Activated naive CD4-positive, alpha-beta T cell treated with anti-CD3 and anti-CD28 coated beads, Interleukin-2, amount 10 ng/mL, durations not matched to agents 7 days and 5 days (primary cell): ENCODE measurements at regions of chr1 and their contacts with region 1.

Region 1: DNA sequence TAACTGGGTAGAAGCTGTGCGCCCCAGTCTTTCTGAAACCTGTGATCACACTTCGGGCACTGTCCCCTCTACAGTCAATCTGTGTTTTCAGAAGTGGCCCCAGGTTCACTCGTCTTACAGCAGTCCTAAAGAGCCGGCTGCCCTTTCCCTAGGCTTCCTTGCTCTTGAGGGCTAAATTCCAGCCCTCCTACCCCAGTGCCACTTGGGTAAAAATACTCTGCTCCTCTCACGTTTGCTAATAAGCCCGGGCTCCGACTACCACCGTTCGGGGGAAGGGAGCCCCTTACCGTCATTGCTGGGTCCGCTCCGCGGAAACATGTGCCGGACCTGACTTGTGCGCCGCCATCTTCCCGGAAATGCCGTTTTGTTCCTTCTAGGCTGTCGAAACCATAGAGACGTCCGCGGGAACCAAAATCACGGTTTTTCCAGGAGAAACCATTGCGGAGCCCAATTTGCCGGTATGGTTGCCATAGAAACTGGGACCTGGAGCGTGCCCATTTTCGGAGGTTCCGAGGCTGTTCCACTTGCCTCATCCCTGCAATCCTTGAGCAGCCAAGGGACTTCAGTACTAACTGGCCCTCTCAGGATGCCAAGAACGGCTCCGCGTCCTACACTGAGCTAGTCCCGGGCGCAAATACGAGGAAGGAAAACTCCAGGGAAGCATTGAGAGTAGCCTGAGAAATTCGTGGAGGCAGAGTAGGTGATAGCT is at the start of gene GPATCH4:
- DNase-seq: peak; percentile 89
- H3K4me3 Mint-ChIP-seq: peak within 1 kb of the TSS; percentile 98
- H3K27ac Mint-ChIP-seq: peak within 1 kb of the TSS; percentile 93
- H3K4me1 Mint-ChIP-seq: peaks cover 41% of the 10 kb centered on the region
- H3K27me3 Mint-ChIP-seq: no peaks in the 10 kb centered on the region

Region 2: DNA sequence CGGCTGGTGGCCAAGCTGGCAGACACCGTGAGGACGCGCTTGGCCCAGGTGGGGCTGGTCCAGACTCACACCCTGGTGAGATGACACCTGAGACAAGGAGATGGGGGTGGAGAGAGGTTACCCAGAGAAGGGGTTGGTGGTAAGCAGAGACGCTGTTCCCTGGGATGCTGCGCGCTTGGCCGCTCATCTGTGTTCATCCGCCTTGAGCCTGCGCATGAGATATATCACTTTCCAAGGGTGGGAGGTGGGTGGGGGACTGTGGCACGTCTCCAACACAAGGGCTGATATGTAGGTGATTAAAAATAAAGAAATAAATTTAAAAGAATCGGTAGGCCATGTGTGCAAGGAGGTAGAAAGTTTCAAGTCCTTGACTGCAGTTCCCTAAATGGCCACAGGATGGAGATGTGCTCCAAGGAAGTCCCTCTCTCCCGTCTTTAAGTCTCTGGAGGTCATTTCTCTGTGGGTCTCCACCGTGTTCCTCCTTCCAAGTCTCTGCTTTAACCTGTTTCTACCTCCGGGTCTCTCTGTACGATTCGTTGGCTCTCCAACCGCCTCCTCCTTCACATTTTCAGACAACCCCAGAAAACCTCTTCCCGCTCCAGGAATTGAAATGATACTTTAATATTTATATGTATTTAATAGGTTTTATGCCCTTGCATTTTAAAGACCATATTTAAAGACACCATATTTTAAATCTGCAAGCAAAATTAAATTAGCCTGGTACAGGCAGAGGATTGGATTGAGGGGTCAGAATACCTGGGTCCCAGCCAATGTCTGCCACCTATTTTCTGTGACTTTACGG is 17.3 kb before region 1 on chr1:
- CTCF ChIA-PET with region 1: interaction called, 12 read pairs
- DNase-seq: peak; percentile 86
- H3K4me3 Mint-ChIP-seq: no peak overlapping the region
- H3K27ac Mint-ChIP-seq: no peak overlapping the region
- H3K4me1 Mint-ChIP-seq: peaks cover 33% of the 10 kb centered on the region
- H3K27me3 Mint-ChIP-seq: peaks cover 9% of the 10 kb centered on the region